Lower lobe of right lung (tissue), 2 donors: ENCODE measurements at regions of chr17 and their contacts with region 1.

Region 1: DNA sequence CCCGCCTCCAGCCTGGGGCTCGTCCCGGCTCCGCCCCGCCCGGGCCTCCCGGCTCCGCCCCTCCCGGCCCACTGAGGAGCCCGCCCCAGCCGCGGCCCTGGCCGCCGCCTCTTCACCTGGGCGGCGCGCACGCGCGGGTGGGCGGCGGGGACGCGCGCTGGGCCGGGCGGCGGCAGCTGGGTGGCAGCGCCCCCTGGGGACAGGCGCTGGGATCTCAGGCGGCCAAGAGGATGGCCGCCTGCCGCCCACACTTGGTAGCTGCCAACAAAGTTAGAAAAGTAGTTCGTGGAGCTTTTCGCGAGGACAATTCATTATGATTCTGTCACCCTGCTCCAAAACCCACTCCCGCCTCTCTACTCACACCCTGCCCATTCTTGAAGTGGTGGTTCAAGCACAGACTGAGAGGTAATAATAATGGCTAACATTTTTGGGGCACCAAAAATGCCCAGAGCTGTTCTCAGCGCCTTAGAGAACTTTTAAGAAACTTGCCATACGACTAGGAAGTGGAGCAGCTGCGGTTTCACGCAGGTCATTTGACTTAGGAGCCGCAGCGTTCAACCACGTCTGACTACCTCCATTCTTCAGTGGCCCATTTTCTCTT is 340 bp upstream of the MYO1D start:
- DNase-seq: peak; percentile 94
- ATAC-seq: peak; percentile 96 to 98
- H3K4me3 ChIP-seq: peak overlapping the region; percentile 72
- H3K27ac ChIP-seq: peak overlapping the region; percentile 94
- H3K4me1 ChIP-seq: peaks cover 29% of the 10 kb centered on the region
- H3K27me3 ChIP-seq: no peaks in the 10 kb centered on the region
- CTCF ChIP-seq: peak; percentile 73

Region 2: GRCh38 chr17:32755045-32755805 is 122.0 kb before region 1 on chr17:
- intact Hi-C with region 1: no loop called
- DNase-seq: no peak
- ATAC-seq: peak; percentile 36 to 66
- H3K4me3 ChIP-seq: no peak overlapping the region
- H3K27ac ChIP-seq: no peak overlapping the region
- H3K4me1 ChIP-seq: no peaks in the 10 kb centered on the region
- H3K27me3 ChIP-seq: no peaks in the 10 kb centered on the region
- CTCF ChIP-seq: peak; percentile 33

Region 3: DNA sequence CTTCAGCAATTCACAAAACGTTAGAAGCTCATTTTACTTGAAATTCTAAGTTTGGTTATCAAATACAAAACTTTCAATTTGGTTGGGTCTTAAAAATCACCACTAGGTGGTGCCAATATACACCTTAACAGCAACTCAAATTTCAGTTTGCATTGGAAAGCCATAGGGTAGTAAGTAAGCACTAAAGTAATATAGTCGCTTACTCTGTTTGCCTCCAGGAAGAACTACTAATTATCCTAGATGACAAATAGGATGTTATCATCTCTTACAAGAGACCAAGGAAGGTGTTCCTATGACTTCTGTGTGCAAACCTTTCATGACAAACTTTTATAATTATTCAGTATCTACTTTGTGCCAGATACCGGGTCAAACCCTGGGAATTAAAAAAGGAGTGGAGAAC is 93.7 kb before region 1 on chr17:
- intact Hi-C with region 1: loop called (anchors 10 kb)
- DNase-seq: no peak
- ATAC-seq: peak; percentile 74 to 77
- H3K4me3 ChIP-seq: no peak overlapping the region
- H3K27ac ChIP-seq: no peak overlapping the region
- H3K4me1 ChIP-seq: no peaks in the 10 kb centered on the region
- H3K27me3 ChIP-seq: no peaks in the 10 kb centered on the region
- CTCF ChIP-seq: peak; percentile 78